ENCODE measurements at regions of chr20 and their contacts with region 1.

Region 1: DNA sequence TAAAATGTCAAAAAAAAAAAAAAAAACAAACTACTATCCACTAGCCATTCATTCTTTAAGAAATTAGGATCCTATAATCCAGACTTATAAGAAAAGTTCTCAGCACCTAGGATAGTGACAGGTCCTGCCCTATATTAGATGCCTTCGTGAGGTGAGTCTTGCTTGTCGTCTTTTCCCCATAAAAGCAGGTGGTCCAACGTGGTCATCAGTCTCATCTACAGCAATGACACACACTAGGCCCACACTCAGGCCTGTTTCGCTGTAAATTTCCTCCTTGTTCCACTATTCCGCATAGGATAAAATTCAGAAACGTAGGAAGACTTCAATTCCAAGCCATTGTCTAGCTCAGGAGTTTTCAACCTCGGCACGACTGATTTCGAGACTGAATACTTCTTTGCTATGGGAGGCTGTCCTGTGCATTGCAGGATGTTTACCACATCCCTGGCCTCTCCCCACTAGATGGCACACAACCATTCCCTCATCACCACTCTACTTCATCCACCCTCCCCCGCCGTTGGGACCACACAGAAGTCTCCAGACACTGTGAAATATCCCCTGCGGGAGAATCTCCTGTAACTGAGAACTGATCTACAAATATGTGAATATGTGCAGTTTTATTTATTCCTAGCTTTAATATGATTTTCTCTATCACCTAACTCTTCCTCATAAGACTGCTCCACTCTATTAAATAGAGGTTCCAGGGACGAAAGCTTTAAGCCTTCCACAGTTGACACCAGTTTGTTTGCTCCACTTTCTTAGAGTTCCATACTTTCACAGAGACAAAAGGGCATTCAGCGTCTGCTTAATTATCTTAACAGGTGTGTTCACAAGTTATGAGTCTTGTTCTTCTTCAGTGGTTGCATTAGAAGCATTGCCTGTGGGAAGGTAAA is 346.3 kb downstream of the BMP2 start:
- DNase-seq: no peak
- ATAC-seq: peak; percentile 98
- H3K4me3 ChIP-seq: no peak overlapping the region
- H3K27ac ChIP-seq: no peak overlapping the region
- H3K4me1 ChIP-seq: no peaks in the 10 kb centered on the region
- H3K27me3 ChIP-seq: no peaks in the 10 kb centered on the region
- CTCF ChIP-seq: peak; percentile 12 to 54 (median 39); a peak in 4 of 6 replicates
- EP300 ChIP-seq: no peak
- POLR2A ChIP-seq: no peak
- RAD21 ChIP-seq: peak; percentile 28; the same call in 1 of the 2 replicates

Region 2: GRCh38 chr20:7859356-7859802 is 745.6 kb after region 1 on chr20:
- CTCF ChIA-PET with region 1: no interaction called
- POLR2A ChIA-PET with region 1: no interaction called
- RAD21 ChIA-PET with region 1: no interaction called
- SMC1A ChIA-PET with region 1: no interaction called
- in situ Hi-C with region 1: no loop called
- intact Hi-C with region 1: loop called (anchors 5 kb)
- DNase-seq: peak; percentile 8
- ATAC-seq: peak; percentile 68
- H3K4me3 ChIP-seq: no peak overlapping the region
- H3K27ac ChIP-seq: no peak overlapping the region
- H3K4me1 ChIP-seq: no peaks in the 10 kb centered on the region
- H3K27me3 ChIP-seq: no peaks in the 10 kb centered on the region
- CTCF ChIP-seq: peak; percentile 50 to 66 (median 51); a peak in 5 of 6 replicates
- EP300 ChIP-seq: no peak
- POLR2A ChIP-seq: no peak
- RAD21 ChIP-seq: peak; percentile 93

Measured in GM12878 (cell line).